ENCODE measurements at regions of chr2 and their contacts with region 1.

Region 1: DNA sequence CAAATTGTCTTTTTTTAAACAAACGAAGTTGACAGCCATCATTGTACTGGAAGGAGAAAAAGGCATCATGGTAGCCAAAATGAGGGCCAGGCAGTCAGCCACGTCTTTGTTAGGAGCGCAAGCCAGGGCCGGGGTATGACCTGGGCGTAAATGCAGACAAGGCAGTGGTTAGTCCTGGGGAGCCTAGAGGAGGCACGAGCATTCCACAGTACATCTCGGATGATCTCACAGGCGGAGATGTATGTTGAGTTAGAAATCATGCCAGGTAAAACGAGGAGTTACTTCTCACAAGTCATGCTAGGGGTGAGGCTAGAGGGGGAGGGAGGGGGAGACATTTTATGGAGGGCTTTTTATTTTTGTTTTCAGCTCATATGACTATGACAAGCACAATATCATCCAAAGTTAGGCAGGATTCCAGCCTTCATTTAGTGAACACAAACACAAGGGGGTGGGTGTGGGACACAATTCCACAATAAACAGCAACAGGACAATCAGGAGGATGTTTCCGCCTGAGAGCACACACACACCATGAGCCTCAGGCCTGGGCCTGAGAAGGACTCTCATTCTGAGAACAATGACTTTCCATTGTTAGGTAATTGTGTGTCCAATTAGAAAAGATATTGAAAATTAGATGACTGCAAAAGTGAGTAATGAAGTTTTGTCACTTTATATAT is 64.4 kb upstream of the PGAP1 start:
- DNase-seq: no peak
- ATAC-seq: no peak
- H3K4me3 ChIP-seq: no peak overlapping the region
- H3K27ac ChIP-seq: no peak overlapping the region
- H3K4me1 ChIP-seq: no peaks in the 10 kb centered on the region
- H3K27me3 ChIP-seq: no peaks in the 10 kb centered on the region

Region 2: DNA sequence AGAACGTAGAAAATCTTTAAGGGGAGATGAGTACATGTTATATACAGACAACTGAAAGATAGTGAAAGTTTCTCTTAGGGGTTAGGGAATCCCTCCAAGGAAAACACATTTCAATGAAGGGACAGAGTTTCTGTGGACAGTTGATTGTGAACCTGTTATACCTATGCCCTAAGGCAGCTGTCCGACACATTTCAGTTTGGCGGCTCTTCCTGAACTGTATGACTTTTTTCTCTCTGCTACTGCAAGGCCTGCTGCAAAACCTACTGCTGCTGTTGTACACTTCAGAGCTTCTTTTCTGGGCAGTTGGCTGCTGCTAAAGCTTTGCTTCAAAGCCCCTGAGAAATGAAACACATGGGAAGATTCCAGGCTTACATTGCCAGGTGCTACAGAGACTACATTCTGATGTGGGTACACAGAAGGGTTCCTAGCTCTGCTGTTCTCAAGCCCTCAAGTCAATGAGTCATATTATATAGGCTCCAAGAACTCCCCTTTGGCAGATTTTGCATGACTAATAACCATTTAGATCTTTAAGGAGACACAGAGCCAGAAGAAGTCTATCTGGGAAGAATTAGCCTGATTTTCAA is 51.6 kb before region 1 on chr2:
- intact Hi-C with region 1: loop called in 2 of 4 experiments (anchors 10 kb)
- DNase-seq: no peak
- ATAC-seq: no peak
- H3K4me3 ChIP-seq: no peak overlapping the region
- H3K27ac ChIP-seq: no peak overlapping the region
- H3K4me1 ChIP-seq: no peaks in the 10 kb centered on the region
- H3K27me3 ChIP-seq: no peaks in the 10 kb centered on the region

Region 3: DNA sequence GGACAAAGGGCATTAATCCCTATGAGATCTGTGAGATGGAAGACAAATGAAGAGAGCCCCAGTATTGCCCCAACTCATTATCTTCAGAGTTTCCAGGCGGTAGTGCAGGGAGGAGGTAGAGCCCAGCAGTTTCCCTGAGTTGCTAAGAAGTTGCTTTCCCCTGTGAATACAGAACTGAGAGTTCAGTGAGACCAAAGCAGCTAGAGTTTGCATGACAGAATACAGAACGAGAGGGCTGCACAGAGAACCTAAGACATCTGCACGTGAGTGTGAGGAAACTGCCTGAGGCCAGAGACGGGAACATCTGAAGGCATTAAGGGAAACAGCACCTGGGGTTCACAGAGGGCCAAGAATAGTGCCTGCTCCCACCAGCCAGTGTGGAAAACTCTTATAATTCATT is 46.3 kb before region 1 on chr2:
- intact Hi-C with region 1: loop called in 2 of 4 experiments (anchors 10 kb)
- DNase-seq: no peak
- ATAC-seq: no peak
- H3K4me3 ChIP-seq: no peak overlapping the region
- H3K27ac ChIP-seq: no peak overlapping the region
- H3K4me1 ChIP-seq: no peaks in the 10 kb centered on the region
- H3K27me3 ChIP-seq: no peaks in the 10 kb centered on the region

Region 4: DNA sequence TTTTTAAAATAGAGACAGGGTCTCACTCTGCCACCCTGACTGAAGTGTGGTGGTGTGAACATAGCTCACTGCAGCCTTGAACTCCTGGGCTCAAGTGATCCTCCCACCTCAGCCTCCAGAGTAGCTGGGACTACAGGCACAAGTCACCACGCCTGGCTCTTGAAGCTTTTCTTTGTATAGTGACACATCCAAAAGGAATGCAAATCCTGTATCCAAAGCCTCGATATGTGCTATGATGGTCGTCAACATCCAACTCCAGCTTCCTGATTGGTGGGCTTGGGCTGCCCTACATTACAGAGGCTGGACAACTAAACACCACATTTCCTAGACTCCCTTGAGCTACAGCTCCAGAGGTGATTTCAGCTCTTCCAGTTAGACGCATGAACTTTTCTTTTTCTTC is 37.3 kb after region 1 on chr2:
- intact Hi-C with region 1: no loop called
- DNase-seq: no peak
- ATAC-seq: no peak
- H3K4me3 ChIP-seq: no peak overlapping the region
- H3K27ac ChIP-seq: no peak overlapping the region
- H3K4me1 ChIP-seq: no peaks in the 10 kb centered on the region
- H3K27me3 ChIP-seq: no peaks in the 10 kb centered on the region

Measured in right cardiac atrium (tissue), 5 donors.